ENCODE measurements at regions of chr10 and their contacts with region 1.

Region 1: DNA sequence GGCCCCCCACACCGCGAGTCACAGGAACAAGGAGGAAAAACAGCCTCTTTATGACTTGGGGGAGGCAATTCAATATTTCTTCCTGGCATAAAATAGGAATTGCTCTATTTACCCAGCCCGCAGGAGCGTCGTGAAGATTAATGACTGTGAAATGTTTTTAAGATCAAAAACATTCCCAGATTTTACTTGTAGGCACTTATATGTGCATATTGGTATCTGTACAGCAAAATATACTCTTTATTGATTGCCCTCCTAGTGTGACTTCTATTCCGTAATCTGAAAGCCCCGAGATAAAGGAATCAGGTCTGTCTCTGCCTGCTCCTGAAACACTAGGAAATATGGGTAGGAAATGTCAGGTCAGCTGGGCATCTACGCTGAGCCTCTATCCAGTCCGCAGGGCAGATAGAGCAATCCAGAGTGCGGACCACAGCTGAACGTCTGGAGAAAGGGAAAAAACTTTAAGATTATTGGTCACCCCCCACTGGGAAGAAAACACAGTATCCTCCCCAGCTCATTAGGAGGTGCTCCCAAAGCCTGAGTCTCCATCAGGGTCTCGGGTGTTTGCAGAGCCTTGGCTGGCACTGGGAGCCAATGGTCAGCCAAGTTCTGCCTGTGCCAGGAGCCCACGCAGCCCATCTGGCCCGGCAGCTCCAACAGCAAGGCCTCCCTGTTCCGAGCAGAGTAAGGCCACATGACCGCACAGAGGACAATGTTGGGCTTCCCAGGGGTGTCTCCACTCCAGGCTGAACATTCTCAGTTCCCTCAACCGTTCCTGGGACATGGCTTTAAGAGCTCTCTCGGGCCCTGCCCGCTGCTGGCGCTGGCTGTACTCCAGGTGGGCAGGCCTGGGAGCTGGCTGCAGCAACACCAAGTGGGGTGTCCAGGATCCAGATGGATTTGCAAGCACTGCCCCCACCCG is 7.7 kb downstream of the CTBP2 start:
- DNase-seq: peak; percentile 65 to 76
- ATAC-seq: peak; percentile 56 to 93 (median 74)
- H3K4me3 ChIP-seq: peak overlapping the region in 2 of 10 donors; percentile 0 to 37
- H3K27ac ChIP-seq: peak overlapping the region in 9 of 10 donors; percentile 39 to 98 (median 67)
- H3K4me1 ChIP-seq: peaks cover 49 to 100% (median 85%) of the 10 kb centered on the region in 9 donors
- H3K27me3 ChIP-seq: no peaks in the 10 kb centered on the region
- CTCF ChIP-seq: peak in 1 of 9 donors; percentile 23

Region 2: DNA sequence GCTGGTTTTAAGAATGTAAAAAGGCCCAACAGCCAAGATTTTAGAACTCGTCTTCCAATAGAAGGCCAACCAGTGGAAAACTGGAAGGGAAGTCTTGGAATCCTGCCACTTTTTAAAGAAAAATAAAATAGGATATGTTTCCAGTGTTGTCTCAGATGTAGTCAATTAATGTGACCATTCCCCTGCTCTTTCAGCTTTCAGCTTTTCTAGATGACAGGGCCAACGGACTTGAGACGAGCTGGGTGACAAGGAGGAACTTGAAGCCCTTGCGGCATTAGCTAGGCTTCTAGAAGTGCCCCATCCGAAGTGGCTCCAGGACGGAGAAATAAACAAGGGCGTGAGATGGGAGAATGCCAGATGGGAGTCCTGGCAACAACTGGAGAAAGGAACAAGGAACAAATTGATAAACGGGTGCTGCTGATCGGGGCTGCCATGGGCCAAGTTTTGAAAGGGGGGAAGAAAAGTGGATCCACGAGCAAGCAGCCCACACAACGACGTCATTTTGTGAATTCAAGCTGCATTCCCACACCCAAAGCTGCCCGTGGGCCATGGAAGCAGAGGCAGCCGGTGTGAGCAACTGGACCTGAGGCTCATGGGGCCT is 34.6 kb before region 1 on chr10:
- intact Hi-C with region 1: loop called in 3 of 10 experiments (anchors 5 kb)
- DNase-seq: no peak
- ATAC-seq: peak; percentile 4 to 45 (median 20)
- H3K4me3 ChIP-seq: no peak overlapping the region
- H3K27ac ChIP-seq: peak overlapping the region in 9 of 10 donors; percentile 18 to 74 (median 61)
- H3K4me1 ChIP-seq: peaks cover 35 to 99% (median 82%) of the 10 kb centered on the region in 9 donors
- H3K27me3 ChIP-seq: no peaks in the 10 kb centered on the region
- CTCF ChIP-seq: no peak

Region 3: DNA sequence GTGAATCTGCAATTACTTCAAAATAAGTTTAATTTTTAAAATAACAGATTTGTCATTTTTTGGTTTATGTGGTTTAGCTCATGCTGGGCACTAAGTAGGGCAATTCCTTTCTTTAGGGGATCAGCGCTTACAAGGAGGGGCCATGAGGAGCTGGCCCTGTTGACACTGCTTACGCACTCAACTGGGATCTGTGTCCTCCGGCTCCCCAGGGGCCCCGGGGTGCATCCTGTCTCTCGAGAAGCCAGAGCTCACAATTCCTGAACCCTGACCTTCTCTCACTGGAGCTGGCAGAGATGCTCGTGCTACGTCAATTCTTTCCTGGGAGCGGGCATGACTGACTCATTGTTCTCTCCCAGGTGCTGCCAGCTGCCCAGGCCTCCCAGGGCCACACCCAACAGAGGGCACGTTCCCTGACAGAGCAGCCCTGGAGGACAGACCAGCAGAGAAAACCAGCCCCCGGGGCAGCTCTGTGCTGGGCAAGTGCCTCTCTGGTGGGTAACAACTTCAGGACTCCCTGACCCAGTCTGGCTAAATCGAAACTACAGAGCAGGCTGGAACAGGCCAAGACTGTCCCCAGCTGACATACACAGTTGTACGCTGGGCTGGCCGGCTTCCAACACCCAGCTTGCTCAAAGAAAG is 29.1 kb before region 1 on chr10:
- intact Hi-C with region 1: loop called in 4 of 10 experiments (anchors 1 to 5 kb)
- DNase-seq: peak; percentile 86 to 87
- ATAC-seq: peak; percentile 82 to 94 (median 86)
- H3K4me3 ChIP-seq: peak overlapping the region in 7 of 10 donors; percentile 5 to 38 (median 23)
- H3K27ac ChIP-seq: peak overlapping the region; percentile 48 to 91 (median 78)
- H3K4me1 ChIP-seq: peaks cover 21 to 97% (median 78%) of the 10 kb centered on the region in 9 donors
- H3K27me3 ChIP-seq: no peaks in the 10 kb centered on the region
- CTCF ChIP-seq: peak in 1 of 9 donors; percentile 12

Region 4: DNA sequence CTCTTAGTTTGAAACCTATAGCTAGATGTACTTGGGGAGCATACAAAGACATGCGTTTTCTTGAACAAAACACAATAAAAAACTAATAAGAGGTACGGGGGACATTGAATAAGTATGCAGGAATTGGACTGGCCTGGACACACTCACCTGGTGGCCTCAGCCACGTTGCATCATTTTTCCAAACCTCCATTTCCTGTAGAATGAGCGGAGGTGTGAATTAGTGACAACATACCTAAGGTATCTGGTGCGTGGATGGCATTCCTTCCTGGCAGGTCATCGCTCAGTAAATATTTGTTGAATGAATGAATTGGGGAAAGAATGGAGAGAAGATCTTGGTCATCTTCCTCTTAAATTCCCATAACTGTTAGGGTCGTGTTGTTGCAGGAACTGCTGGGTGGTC is 110.8 kb after region 1 on chr10:
- intact Hi-C with region 1: no loop called
- DNase-seq: no peak
- ATAC-seq: no peak
- H3K4me3 ChIP-seq: no peak overlapping the region
- H3K27ac ChIP-seq: no peak overlapping the region
- H3K4me1 ChIP-seq: no peaks in the 10 kb centered on the region
- H3K27me3 ChIP-seq: peaks cover 0 to 23% (median 0%) of the 10 kb centered on the region in 7 donors
- CTCF ChIP-seq: no peak